Activated naive CD4-positive, alpha-beta T cell treated with anti-CD3 and anti-CD28 coated beads for 36 hours (primary cell): ENCODE measurements at regions of chr3 and their contacts with region 1.

Region 1: DNA sequence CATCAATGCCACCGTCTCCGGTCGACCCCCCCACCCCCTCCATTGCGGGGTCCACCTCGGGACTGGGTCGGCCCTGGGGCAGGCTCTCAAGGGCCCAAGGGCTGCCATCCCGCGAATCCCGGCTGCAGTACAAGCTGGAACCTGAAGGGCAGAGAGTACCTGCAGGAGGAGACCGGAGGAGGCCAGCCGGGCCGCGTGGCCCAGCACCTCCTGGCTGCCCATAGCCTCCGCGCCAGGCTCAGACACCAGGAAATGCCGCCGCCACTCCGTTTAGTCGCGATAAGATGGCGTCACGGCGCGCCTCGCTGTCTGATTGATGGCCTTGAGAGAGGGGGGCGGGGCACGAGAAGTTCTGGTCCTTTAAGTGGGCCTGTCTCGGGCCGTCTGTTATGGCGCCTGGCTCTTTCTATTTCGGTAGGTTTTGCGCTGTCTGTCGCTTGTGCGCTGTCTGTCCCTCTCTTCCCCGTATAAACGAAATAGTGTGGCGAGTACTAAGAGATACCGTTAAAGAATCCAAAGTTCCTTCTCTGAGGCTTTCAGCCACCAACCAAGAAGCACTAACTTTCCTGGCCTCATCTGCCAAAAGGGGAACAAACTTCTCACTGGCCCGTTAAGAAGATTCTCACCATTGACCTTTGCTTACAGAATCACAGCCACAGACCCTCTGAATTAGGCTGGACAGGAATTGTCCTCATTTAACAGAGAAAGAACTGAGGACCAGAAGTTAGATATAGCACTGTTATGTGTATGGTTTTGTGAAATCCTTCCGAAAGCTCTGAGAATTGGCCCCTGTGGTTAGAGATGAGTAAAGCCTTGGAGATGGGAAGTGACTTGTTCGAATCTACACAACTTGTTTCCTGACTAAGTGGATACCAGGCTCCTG is at the start of gene RFT1:
- DNase-seq: peak; percentile 99
- H3K4me3 Mint-ChIP-seq: peak within 1 kb of the TSS; percentile 87
- H3K27ac Mint-ChIP-seq: peak within 1 kb of the TSS; percentile 93
- H3K4me1 Mint-ChIP-seq: peaks cover 27% of the 10 kb centered on the region
- H3K27me3 Mint-ChIP-seq: no peaks in the 10 kb centered on the region
- total RNA-seq, gene RFT1: 29.9 to 31.7 TPM

Region 2: GRCh38 chr3:53102601-53103147 is 27.7 kb before region 1 on chr3:
- CTCF ChIA-PET with region 1: interaction called, 26 read pairs
- intact Hi-C with region 1: loop called (anchors 1 kb)
- DNase-seq: peak; percentile 84
- H3K4me3 Mint-ChIP-seq: peak overlapping the region; percentile 11
- H3K27ac Mint-ChIP-seq: peak overlapping the region; percentile 80
- H3K4me1 Mint-ChIP-seq: peaks cover 68% of the 10 kb centered on the region
- H3K27me3 Mint-ChIP-seq: no peaks in the 10 kb centered on the region

Region 3: GRCh38 chr3:53140847-53141845 is 10.7 kb after region 1 on chr3:
- CTCF ChIA-PET with region 1: interaction called, 14 read pairs
- intact Hi-C with region 1: no loop called
- DNase-seq: peak; percentile 30
- H3K4me3 Mint-ChIP-seq: no peak overlapping the region
- H3K27ac Mint-ChIP-seq: no peak overlapping the region
- H3K4me1 Mint-ChIP-seq: no peaks in the 10 kb centered on the region
- H3K27me3 Mint-ChIP-seq: no peaks in the 10 kb centered on the region

Region 4: DNA sequence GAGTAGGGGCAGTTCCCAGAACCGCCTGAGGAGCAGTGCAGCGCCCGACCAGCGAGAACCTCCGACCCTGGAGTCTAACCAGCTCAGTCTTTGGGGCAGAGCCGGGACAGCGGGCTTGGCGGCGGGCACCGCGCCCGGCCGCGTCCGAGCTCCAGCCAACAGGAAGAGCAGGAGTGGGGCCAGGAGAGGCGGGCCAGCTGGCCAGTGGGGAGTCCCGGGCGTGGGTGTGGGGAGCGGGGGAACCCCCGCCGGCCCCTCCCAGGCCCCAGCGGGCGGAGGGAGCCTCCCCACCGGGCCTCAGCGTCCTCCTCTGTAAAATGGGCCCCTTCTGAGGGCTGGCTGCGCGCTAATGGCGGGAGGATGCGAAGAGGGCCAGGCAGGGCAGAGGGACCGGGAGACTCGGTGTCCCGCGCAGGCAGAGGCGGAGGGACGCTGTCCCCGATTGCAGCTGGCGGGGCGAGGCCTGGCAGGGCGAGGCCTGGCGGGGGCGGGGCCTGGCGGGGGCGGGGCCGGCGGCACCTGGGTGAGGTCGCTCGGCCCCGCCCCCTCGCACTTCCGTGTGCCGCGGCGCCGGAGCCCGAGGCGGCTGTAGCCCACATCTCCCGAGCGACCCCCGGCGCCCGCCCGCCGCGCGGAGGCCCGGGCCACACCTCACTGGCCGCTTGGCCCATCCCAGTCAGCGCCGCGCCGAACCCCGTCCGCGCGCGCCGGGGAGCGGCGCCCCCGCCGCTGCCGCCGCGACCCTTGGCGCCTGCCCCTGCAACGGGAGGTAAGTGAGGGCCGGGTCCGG is 30.4 kb after region 1 on chr3 and contains the start of gene PRKCD:
- CTCF ChIA-PET with region 1: interaction called, 14 read pairs
- intact Hi-C with region 1: loop called (anchors 1 kb)
- DNase-seq: peak; percentile 76
- H3K4me3 Mint-ChIP-seq: peak within 1 kb of the TSS; percentile 74
- H3K27ac Mint-ChIP-seq: peak within 1 kb of the TSS; percentile 59
- H3K4me1 Mint-ChIP-seq: peaks cover 18% of the 10 kb centered on the region
- H3K27me3 Mint-ChIP-seq: peaks cover 18% of the 10 kb centered on the region
- total RNA-seq, gene PRKCD: 9.1 to 10.2 TPM

Region 5: GRCh38 chr3:53195602-53196574 is 65.5 kb after region 1 on chr3:
- CTCF ChIA-PET with region 1: interaction called, 160 read pairs
- intact Hi-C with region 1: loop called (anchors 1 kb)
- DNase-seq: peak; percentile 59
- H3K4me3 Mint-ChIP-seq: no peak overlapping the region
- H3K27ac Mint-ChIP-seq: no peak overlapping the region
- H3K4me1 Mint-ChIP-seq: peaks cover 3% of the 10 kb centered on the region
- H3K27me3 Mint-ChIP-seq: no peaks in the 10 kb centered on the region